ENCODE measurements at regions of chr20 and their contacts with region 1.

Region 1: DNA sequence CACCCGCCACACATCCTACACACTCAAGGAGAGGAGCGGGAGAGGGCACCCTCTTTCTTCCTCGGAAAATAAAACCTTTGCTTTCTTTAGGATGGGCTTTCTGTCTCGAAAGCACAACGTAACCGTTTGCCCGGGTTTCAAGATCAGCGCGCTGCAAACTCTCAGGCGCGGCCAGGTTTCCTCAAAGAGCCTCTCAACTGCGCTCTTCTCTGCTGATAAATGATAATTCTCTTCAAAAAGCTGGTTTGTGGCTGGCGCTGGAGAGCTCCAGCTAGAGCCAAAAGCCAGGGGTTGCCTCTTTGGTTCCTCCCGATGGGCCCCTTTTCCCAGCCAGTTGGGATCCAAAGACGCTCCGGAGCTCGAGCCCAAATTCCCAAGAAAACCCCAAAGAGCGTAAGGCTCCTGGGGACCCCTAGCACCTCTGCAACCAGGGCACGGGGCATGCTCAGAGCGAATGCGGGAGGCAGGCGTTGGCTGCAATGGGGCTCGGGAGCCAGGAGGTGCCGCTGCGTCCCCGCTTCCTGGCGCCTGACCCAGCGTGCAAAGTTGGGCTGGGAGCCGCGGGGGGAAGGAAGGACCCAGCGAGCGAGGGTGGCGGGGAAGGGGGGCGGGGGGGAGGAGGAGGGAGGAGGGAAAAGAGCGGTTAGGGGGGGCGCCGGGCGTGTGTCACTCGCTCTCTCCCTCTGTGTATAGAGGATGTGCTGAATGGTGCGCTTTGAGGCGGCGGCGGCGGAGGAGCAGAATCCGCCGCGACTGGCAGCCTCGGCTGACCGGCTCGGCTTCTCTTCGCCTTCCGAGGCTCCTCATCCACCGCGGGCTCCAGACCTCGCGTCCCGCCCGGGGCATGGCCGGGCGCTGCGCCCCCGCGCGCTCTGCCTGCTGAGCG is at the start of gene PLCB1:
- DNase-seq: peak; percentile 90
- H3K4me3 ChIP-seq: peak within 1 kb of the TSS; percentile 74
- H3K27ac ChIP-seq: peak within 1 kb of the TSS; percentile 63
- H3K4me1 ChIP-seq: peaks cover 16% of the 10 kb centered on the region
- H3K27me3 ChIP-seq: peaks cover 17% of the 10 kb centered on the region
- CTCF ChIP-seq: peak; percentile 85
- total RNA-seq, gene PLCB1: 6.8 and 10.4 TPM in 2 replicates

Region 2: GRCh38 chr20:8043687-8044282 is 88.1 kb before region 1 on chr20:
- CTCF ChIA-PET with region 1: interaction called, 5 read pairs
- POLR2A ChIA-PET with region 1: no interaction called
- intact Hi-C with region 1: loop called (anchors 5 kb)
- DNase-seq: peak; percentile 56
- H3K4me3 ChIP-seq: no peak overlapping the region
- H3K27ac ChIP-seq: no peak overlapping the region
- H3K4me1 ChIP-seq: no peaks in the 10 kb centered on the region
- H3K27me3 ChIP-seq: peaks cover 9% of the 10 kb centered on the region
- CTCF ChIP-seq: peak; percentile 75

Region 3: DNA sequence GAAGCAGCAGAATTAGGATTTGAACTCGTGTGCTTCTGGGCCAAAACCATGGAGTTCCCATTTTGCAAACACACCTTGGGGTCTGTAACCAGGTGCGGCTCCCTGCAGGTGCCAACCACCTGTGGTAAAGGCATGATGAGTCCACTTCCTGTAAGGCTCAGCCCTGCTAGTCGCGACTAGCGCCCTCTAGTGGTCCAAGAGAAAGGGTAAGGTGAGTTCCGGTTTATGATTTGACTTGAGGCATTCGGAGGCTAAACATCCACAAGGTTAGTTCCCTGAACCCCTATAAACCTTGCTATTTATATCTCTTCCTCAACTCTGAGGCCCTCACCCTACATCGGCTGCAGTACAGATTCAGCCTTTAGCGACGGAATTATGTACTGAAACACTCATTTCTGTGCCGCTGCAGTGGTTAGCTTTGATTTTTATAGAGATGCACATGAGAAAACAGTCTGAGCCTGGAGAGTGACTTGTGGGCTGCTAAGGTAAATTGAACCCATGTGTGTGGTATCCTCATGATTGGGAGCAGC is 173.7 kb after region 1 on chr20:
- CTCF ChIA-PET with region 1: no interaction called
- POLR2A ChIA-PET with region 1: no interaction called
- intact Hi-C with region 1: loop called (anchors 2 kb)
- DNase-seq: peak; percentile 64
- H3K4me3 ChIP-seq: no peak overlapping the region
- H3K27ac ChIP-seq: no peak overlapping the region
- H3K4me1 ChIP-seq: peaks cover 24% of the 10 kb centered on the region
- H3K27me3 ChIP-seq: no peaks in the 10 kb centered on the region
- CTCF ChIP-seq: peak; percentile 89

Region 4: GRCh38 chr20:8389381-8390036 is 257.7 kb after region 1 on chr20:
- CTCF ChIA-PET with region 1: interaction called, 3 read pairs
- POLR2A ChIA-PET with region 1: no interaction called
- intact Hi-C with region 1: loop called (anchors 1 kb)
- DNase-seq: peak; percentile 75
- H3K4me3 ChIP-seq: no peak overlapping the region
- H3K27ac ChIP-seq: no peak overlapping the region
- H3K4me1 ChIP-seq: peaks cover 31% of the 10 kb centered on the region
- H3K27me3 ChIP-seq: no peaks in the 10 kb centered on the region
- CTCF ChIP-seq: peak; percentile 61

Region 5: GRCh38 chr20:8527998-8528723 is 396.3 kb after region 1 on chr20:
- CTCF ChIA-PET with region 1: no interaction called
- POLR2A ChIA-PET with region 1: no interaction called
- intact Hi-C with region 1: loop called (anchors 10 kb)
- DNase-seq: no peak
- H3K4me3 ChIP-seq: no peak overlapping the region
- H3K27ac ChIP-seq: no peak overlapping the region
- H3K4me1 ChIP-seq: peaks cover 9% of the 10 kb centered on the region
- H3K27me3 ChIP-seq: no peaks in the 10 kb centered on the region
- CTCF ChIP-seq: no peak